Naive thymus-derived CD4-positive, alpha-beta T cell (primary cell): ENCODE measurements at regions of chr18 and their contacts with region 1.

Region 1: GRCh38 chr18:69908838-69909237 is 38.8 kb downstream of the CD226 start:
- DNase-seq: no peak
- ATAC-seq: no peak
- H3K4me3 ChIP-seq: no peak overlapping the region
- H3K4me3 Mint-ChIP-seq: peak overlapping the region in 3 of 10 donors; percentile 6 to 55 (median 33)
- H3K27ac ChIP-seq: no peak overlapping the region
- H3K27ac Mint-ChIP-seq: peak overlapping the region in 7 of 9 donors; percentile 11 to 86 (median 27)
- H3K4me1 ChIP-seq: peaks cover 14 to 15% of the 10 kb centered on the region in 2 donors
- H3K4me1 Mint-ChIP-seq: peaks cover 40 to 69% (median 55%) of the 10 kb centered on the region in 7 donors
- H3K27me3 ChIP-seq: no peaks in the 10 kb centered on the region
- H3K27me3 Mint-ChIP-seq: no peaks in the 10 kb centered on the region

Region 2: DNA sequence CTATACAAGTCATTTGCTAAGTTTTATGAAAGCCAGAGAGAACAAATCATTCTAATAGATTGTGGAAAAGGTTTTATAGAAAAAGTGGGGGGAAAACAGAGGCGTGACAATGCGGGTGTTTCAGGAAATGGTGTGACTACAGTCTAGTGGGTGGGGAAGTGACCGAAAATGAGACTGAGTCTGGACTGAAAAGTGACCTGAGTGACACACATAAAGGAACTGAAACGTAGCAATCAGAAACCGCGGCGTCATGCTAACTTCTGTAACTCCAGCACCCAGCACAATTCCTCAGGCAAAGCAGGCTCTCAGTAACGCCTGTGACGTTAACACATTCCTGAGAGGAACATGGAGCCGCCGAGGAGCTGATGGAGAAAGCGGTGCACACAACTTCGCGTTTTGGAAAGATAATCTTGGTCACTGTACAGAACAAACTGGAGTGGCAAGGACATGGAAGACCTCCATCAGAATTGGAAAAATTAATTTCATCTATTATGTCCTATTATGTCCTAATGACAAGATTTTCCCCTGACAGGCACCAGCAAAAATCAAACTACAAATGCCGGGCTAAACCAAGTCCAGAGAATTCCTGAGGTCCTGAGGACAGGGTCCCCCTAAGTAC is 40.2 kb after region 1 on chr18:
- CTCF ChIA-PET with region 1: no interaction called
- POLR2A ChIA-PET with region 1: interaction called, 3 read pairs
- intact Hi-C with region 1: loop called in 1 of 2 experiments (anchors 1 kb)
- DNase-seq: peak in 1 of 9 donors; percentile 53
- ATAC-seq: peak; percentile 73
- H3K4me3 ChIP-seq: peak overlapping the region; percentile 0
- H3K4me3 Mint-ChIP-seq: no peak overlapping the region
- H3K27ac ChIP-seq: peak overlapping the region; percentile 55
- H3K27ac Mint-ChIP-seq: no peak overlapping the region
- H3K4me1 ChIP-seq: peaks cover 45 to 77% of the 10 kb centered on the region in 2 donors
- H3K4me1 Mint-ChIP-seq: peaks cover 12 to 63% (median 42%) of the 10 kb centered on the region in 7 donors
- H3K27me3 ChIP-seq: no peaks in the 10 kb centered on the region
- H3K27me3 Mint-ChIP-seq: no peaks in the 10 kb centered on the region